ENCODE measurements at regions of chrX and their contacts with region 1.

Region 1: DNA sequence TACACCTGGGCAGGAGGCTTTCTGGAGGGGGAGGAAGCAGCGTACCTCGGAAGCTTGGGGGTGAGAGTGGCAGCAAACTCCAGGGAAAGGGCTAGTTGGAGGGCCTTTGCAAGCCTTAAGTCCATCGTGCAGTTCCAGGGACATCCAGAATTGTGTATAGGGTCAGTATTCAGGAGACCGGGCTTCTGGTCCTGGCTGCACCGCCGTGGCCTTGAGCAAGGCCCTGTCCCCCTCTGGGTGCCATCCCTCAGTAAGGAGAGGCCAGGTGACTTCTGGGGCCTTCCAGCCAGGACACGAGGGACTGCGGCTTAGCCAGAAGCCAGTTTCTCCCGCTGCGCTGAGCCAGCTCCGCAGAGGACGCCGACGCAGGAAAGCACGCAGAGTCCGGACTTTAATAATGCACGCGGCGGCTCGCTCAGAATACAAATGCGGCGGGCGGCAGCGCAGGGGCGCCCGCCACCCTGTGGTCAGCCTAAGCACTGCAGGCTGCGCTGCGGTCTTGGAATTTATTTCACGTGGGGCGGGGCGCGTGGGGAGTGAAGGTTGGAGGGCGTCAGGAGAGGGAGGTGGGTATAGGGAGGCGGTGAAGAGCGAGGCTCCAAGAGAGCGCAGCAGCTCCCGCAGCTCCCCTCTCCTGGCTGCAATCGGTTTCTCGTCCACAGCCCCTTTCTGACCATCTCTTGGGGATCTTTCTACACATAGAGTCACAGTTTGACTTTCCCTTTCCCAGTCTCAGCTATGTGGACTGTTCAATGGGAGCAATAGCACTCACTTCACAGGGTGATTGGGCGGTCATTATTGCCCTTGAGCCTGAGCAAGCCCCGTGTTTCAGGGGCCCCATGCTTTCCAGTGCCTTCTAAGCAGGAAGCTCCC is 94.1 kb upstream of the GPR50 start:
- DNase-seq: peak; percentile 74
- ATAC-seq: peak; percentile 76
- H3K4me3 Mint-ChIP-seq: no peak overlapping the region
- H3K27ac Mint-ChIP-seq: no peak overlapping the region
- H3K4me1 Mint-ChIP-seq: no peaks in the 10 kb centered on the region
- H3K27me3 Mint-ChIP-seq: peaks cover 19% of the 10 kb centered on the region

Region 2: DNA sequence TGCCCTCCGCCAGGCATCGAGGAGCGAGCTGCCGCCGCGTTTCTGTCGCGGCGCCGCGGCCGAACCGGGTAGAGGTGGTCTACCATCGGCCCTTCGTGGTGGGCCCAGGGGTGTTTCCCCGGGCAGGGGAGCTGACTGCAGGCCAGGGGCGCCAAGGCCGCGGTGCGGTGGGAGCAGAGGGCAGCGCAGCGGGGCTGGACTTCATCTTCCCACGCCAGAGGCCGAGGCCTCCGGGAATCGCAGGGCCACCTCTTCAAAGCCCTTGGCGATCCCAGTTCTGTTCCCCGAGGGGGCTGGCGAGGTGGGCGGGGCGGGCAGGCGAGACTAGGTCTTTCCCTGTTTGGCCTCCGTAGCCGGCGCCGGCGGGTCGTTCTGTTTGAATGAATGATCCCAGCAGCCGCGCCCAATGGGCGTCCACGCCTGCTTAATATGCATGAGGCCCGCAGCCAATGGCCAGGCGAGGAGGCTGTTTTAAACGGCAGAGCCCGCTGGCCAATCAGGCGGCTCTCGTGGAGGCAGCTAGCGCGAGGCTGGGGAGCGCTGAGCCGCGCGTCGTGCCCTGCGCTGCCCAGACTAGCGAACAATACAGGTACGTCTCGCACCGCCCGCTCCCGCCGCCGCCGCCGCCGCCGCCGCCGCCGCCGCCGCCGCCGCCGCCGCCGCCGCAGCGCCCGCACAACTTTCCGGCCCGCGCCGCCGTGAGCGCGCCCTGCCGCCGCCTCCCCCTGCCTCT is 99.4 kb before region 1 on chrX and contains the start of gene HMGB3:
- CTCF ChIA-PET with region 1: no interaction called
- POLR2A ChIA-PET with region 1: no interaction called
- intact Hi-C with region 1: loop called (anchors 1 to 10 kb)
- DNase-seq: peak; percentile 91
- ATAC-seq: peak; percentile 99
- H3K4me3 Mint-ChIP-seq: peak within 1 kb of the TSS; percentile 66
- H3K27ac Mint-ChIP-seq: no peak within 1 kb of the TSS
- H3K4me1 Mint-ChIP-seq: peaks cover 4% of the 10 kb centered on the region
- H3K27me3 Mint-ChIP-seq: peaks cover 16% of the 10 kb centered on the region
- total RNA-seq, gene HMGB3: 26.5 to 29.3 TPM

Region 3: GRCh38 chrX:151416504-151417048 is 334.3 kb after region 1 on chrX:
- CTCF ChIA-PET with region 1: no interaction called
- POLR2A ChIA-PET with region 1: no interaction called
- intact Hi-C with region 1: no loop called
- DNase-seq: no peak
- ATAC-seq: peak; percentile 36
- H3K4me3 Mint-ChIP-seq: no peak overlapping the region
- H3K27ac Mint-ChIP-seq: peak overlapping the region; percentile 73
- H3K4me1 Mint-ChIP-seq: peaks cover 35% of the 10 kb centered on the region
- H3K27me3 Mint-ChIP-seq: no peaks in the 10 kb centered on the region

Measured in activated CD4-positive, alpha-beta T cell treated with anti-CD3 and anti-CD28 coated beads for 36 hours (primary cell).